Activated CD8-positive, alpha-beta T cell treated with anti-CD3 and anti-CD28 coated beads, Interleukin-2, amount 10 ng/mL, durations not matched to agents 7 days and 5 days (primary cell): ENCODE measurements at regions of chr6 and their contacts with region 1.

Region 1: DNA sequence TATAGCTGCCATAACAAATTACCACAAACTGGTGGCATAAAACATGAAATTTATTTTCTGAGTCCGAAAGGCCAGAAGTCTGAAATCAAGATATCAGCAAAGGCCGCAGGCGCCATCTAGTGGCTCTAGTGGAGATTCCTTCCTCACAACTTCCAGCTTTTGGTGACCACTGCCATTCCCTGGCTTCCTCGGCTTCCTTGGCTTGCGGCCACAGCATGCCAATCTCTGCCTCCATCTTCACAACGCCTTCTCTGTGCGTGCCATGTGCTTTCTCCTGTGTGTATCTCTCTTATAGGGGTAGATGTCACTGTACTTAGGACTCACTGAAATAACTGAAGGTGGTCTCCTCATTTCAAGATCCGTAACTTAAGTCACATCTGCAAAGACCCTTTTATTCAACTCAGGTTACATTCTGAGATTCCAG is 5.4 kb upstream of the PLAGL1 start:
- DNase-seq: peak; percentile 67
- ATAC-seq: no peak
- H3K4me3 Mint-ChIP-seq: no peak overlapping the region
- H3K27ac Mint-ChIP-seq: no peak overlapping the region
- H3K4me1 Mint-ChIP-seq: peaks cover 5% of the 10 kb centered on the region
- H3K27me3 Mint-ChIP-seq: peaks cover 15% of the 10 kb centered on the region

Region 2: DNA sequence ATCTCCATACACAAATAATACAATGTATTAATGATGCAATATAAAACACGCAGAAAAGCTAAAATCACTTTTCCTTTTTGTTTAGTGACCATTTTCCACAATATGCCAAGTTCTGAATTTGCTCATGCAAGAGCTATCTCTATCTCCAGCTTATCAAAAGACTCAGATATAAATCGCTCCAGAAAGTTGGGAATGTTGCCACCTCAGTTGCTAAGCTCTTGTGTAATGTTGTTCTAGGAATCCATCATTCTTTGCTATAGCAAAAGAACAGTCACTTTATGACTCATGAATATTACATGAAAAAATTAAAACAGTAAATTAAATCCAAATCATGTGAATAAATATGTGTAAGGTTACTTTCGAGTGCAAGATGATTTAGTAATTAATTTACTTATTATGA is 14.1 kb before region 1 on chr6:
- CTCF ChIA-PET with region 1: interaction called, 11 read pairs
- POLR2A ChIA-PET with region 1: no interaction called
- DNase-seq: no peak
- ATAC-seq: no peak
- H3K4me3 Mint-ChIP-seq: no peak overlapping the region
- H3K27ac Mint-ChIP-seq: no peak overlapping the region
- H3K4me1 Mint-ChIP-seq: no peaks in the 10 kb centered on the region
- H3K27me3 Mint-ChIP-seq: peaks cover 4% of the 10 kb centered on the region

Region 3: DNA sequence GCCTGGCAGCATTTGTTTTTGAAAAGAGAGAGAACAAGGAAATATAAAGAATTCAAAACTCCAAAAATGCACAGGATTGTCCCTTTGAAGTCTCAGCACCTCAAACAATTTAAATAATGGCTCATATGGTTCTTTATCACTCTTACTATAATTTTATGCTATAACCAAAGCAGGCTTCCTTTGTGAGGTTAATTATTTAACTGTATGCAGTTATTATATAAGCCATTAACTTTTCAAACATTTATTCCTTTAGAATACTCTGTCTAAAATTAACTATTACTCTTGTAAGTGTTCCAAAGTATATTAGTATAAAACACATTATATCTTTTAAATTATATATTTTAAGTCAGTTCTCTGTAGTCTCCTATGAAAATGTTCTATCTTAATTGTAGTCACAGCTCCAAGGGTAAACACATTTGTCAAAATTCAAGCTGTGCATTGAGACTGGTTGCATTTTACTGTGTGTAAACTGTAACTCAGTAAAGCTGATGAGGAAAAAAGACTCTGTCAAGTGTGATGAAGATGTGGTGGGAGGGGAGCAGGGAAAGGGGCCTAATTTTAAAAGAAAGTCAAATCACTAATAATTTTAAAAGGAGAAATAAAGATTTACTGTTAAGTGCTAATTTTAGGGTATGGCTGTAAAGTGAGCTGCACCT is 14.6 kb after region 1 on chr6:
- CTCF ChIA-PET with region 1: interaction called, 26 read pairs
- POLR2A ChIA-PET with region 1: no interaction called
- DNase-seq: no peak
- ATAC-seq: no peak
- H3K4me3 Mint-ChIP-seq: no peak overlapping the region
- H3K27ac Mint-ChIP-seq: no peak overlapping the region
- H3K4me1 Mint-ChIP-seq: no peaks in the 10 kb centered on the region
- H3K27me3 Mint-ChIP-seq: peaks cover 5% of the 10 kb centered on the region

Region 4: GRCh38 chr6:144036064-144036834 is 22.8 kb after region 1 on chr6:
- CTCF ChIA-PET with region 1: interaction called, 14 read pairs
- POLR2A ChIA-PET with region 1: no interaction called
- DNase-seq: peak; percentile 51
- ATAC-seq: peak; percentile 85
- H3K4me3 Mint-ChIP-seq: peak overlapping the region; percentile 46
- H3K27ac Mint-ChIP-seq: peak overlapping the region; percentile 62
- H3K4me1 Mint-ChIP-seq: peaks cover 18% of the 10 kb centered on the region
- H3K27me3 Mint-ChIP-seq: no peaks in the 10 kb centered on the region